ENCODE measurements at regions of chr1 and their contacts with region 1.

Region 1: DNA sequence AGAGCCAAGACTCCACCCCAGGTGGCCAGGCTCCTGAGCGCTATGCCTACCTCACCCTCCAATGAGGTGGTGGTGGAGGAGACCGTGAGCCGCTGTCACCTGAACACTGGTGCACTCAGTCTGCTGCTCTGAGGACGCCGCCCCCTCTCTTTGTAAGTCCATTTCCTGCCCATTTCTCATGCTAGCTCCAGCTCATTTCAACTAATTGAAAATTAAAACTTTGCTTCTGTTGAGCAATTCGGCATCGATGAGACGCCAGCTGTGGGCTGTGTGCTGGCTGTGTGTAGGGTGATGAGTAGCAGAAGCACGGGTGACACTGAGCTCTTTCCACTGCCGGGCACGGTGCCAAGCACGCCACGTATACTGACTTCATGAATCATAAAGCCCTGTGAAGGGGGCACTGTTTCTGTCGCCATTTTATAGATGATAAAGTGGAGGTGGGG is 11.2 kb downstream of the TNFRSF1B start:
- DNase-seq: peak; percentile 86
- ATAC-seq: peak; percentile 45
- H3K4me3 Mint-ChIP-seq: peak overlapping the region; percentile 60
- H3K27ac Mint-ChIP-seq: peak overlapping the region; percentile 99
- H3K4me1 Mint-ChIP-seq: peaks cover 88% of the 10 kb centered on the region
- H3K27me3 Mint-ChIP-seq: no peaks in the 10 kb centered on the region

Region 2: GRCh38 chr1:12153181-12153785 is 24.7 kb before region 1 on chr1:
- CTCF ChIA-PET with region 1: interaction called, 33 read pairs
- DNase-seq: no peak
- ATAC-seq: no peak
- H3K4me3 Mint-ChIP-seq: no peak overlapping the region
- H3K27ac Mint-ChIP-seq: peak overlapping the region; percentile 99
- H3K4me1 Mint-ChIP-seq: peaks cover 92% of the 10 kb centered on the region
- H3K27me3 Mint-ChIP-seq: no peaks in the 10 kb centered on the region

Region 3: GRCh38 chr1:12166834-12167492 is 11.1 kb before region 1 on chr1 and contains the start of gene TNFRSF1B:
- CTCF ChIA-PET with region 1: interaction called, 13 read pairs
- DNase-seq: peak; percentile 79
- ATAC-seq: peak; percentile 67
- H3K4me3 Mint-ChIP-seq: peak within 1 kb of the TSS; percentile 100
- H3K27ac Mint-ChIP-seq: peak within 1 kb of the TSS; percentile 94
- H3K4me1 Mint-ChIP-seq: peaks cover 75% of the 10 kb centered on the region
- H3K27me3 Mint-ChIP-seq: no peaks in the 10 kb centered on the region
- total RNA-seq, gene TNFRSF1B: 294 to 370 TPM